ENCODE measurements at regions of chr1 and their contacts with region 1.

Region 1: DNA sequence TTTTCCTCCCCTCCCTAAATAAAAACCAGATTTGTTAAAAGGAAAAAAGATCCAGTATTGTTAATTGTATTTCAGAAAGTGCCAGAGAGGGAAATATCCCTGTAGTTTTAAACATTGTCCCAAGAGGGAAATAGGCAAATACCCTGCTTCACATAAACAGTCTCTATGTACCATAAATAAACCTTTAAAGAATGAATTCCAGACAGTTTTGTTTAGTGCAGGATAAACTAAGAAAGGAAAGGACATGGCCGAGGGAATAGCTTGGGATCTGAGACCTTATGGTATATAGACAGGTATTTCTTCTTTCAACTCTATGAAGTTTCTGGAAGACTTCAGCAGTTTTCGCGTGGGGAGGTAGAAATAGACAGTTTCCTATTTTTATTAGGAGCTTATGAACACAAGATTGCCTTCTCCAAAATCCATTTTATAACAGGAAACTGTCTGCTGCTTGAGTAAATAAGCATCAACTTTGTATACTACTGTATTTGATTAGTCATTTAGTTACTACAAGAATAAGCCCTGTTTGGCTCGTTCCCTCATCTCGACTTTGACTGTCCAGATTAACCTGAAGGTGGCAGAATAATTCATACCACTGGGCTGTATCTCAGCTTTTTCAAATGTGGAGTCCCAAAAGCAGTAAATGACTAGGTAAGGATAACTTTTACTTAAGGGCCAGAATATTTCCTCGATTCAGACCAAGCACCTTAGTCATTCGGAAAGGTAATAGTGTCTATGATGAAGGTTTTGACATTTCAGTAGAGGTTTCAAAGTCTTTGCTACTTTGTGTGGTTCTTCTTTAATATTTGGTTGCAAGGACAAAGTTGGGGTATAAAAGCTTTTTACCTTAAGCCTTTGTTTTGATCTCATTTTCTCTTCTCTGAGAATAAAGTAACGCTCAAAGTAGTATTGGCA is 177.5 kb downstream of the VPS13D start:
- DNase-seq: peak; percentile 56
- ATAC-seq: peak; percentile 34; the same call in 1 of the 3 replicates
- H3K4me3 ChIP-seq: peak overlapping the region in 1 of 3 experiments; percentile 13; a peak in 2 of 6 replicates
- H3K27ac ChIP-seq: peak overlapping the region; percentile 76
- H3K4me1 ChIP-seq: peaks cover 82% of the 10 kb centered on the region
- H3K27me3 ChIP-seq: no peaks in the 10 kb centered on the region
- CTCF ChIP-seq: peak; percentile 66
- EP300 ChIP-seq: no peak
- POLR2A ChIP-seq: no peak
- RAD21 ChIP-seq: no peak

Region 2: DNA sequence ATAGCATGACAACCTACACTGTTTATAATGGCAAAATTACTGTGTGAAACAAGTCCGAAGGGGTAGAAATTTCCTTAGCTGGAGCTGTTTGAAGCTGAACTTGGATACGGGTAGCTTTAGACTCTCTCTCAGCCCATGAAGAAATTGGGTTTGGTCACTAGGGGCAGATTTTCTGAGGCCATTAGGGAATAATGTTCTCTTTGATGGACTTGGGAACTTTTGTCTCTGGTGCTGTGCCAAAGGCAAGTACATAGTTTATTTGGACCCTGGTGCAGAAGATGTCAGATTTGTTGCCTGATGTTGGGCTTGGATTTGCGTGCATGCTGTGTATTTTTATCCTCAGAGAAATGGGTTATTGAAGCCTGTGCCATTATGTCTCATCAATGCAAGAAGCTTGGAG is 67.9 kb before region 1 on chr1:
- CTCF ChIA-PET with region 1: no interaction called
- POLR2A ChIA-PET with region 1: interaction called, 4 read pairs
- in situ Hi-C with region 1: no loop called
- intact Hi-C with region 1: loop called (anchors 10 kb)
- DNase-seq: peak; percentile 62
- ATAC-seq: peak; percentile 71
- H3K4me3 ChIP-seq: no peak overlapping the region
- H3K27ac ChIP-seq: no peak overlapping the region
- H3K4me1 ChIP-seq: peaks cover 47% of the 10 kb centered on the region
- H3K27me3 ChIP-seq: no peaks in the 10 kb centered on the region
- CTCF ChIP-seq: peak; percentile 24; the same call in 1 of the 2 replicates
- EP300 ChIP-seq: no peak
- POLR2A ChIP-seq: no peak
- RAD21 ChIP-seq: no peak

Region 3: DNA sequence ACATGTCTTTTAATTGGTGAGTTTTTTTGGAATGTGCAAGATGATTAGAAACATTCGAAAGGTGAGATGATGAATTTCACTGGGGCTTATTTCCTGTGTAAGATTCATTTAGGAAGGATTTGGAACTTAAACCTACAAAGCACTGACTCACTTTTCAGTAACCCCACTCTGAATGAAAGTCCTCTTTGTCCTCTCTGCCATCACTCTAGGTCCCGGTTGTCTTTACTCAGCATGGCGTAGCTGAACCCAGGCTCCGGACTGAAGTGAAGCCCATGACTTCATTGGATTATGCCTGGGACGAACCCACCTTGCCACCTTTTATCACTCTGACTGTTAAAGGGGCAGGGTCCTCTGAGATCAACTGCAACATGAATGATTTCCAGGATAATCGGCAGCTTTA is 38.0 kb before region 1 on chr1:
- CTCF ChIA-PET with region 1: no interaction called
- POLR2A ChIA-PET with region 1: no interaction called
- in situ Hi-C with region 1: no loop called
- intact Hi-C with region 1: loop called (anchors 5 kb)
- DNase-seq: peak; percentile 66
- ATAC-seq: no peak
- H3K4me3 ChIP-seq: no peak overlapping the region
- H3K27ac ChIP-seq: peak overlapping the region; percentile 10
- H3K4me1 ChIP-seq: peaks cover 22% of the 10 kb centered on the region
- H3K27me3 ChIP-seq: no peaks in the 10 kb centered on the region
- CTCF ChIP-seq: no peak
- EP300 ChIP-seq: no peak
- POLR2A ChIP-seq: no peak
- RAD21 ChIP-seq: no peak

Region 4: DNA sequence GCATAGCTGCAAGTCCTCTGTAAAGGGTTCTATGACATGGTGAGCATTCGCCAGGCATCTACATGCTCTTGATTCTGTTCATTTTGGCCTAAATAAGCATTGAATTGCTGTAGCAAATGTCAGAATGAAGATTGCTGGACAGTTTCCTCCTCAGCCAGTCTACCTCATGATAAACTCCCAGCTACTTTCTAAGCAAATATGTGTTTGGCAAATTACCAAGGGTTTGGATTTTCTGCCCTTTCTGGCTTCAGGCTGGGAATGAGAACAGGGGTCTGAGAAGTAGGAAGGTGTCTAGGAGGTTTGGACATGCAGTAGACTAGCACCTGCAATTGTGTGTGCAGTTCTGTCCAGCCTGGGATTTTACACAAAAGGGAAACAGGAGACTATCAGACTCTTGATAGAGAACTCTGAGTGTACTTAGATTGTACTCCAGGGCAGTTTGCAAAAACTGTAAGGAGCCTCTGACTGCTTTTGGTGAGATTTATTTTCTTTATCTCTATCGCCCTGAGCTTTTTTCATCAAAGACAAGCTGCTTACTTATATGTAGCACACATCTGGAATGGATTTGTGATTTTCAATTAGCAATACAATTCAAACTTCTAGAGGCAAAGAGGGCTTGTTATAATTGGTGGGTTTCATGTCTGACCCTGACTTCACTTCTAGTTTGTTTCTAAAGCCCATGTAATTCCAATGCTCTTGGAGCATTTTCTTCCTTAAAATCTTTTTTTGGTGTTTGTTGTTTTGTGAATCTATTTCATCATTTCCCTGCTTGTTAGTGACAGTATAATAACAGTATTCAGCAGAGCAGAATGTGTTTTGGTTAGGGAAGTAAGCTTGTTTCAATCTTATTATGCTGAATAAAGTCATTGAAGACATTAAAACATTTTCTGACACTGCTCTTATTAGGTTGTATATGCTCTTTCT is 26.7 kb before region 1 on chr1:
- CTCF ChIA-PET with region 1: interaction called, 3 read pairs
- POLR2A ChIA-PET with region 1: interaction called, 126 read pairs
- in situ Hi-C with region 1: no loop called
- intact Hi-C with region 1: loop called (anchors 1 kb)
- DNase-seq: peak; percentile 54
- ATAC-seq: peak; percentile 25
- H3K4me3 ChIP-seq: peak overlapping the region in 1 of 3 experiments; percentile 57; a peak in 1 of 6 replicates
- H3K27ac ChIP-seq: peak overlapping the region; percentile 99
- H3K4me1 ChIP-seq: peaks cover 67% of the 10 kb centered on the region
- H3K27me3 ChIP-seq: no peaks in the 10 kb centered on the region
- CTCF ChIP-seq: no peak
- EP300 ChIP-seq: peak in 1 of 2 experiments; percentile 19; a peak in 1 of 4 replicates
- POLR2A ChIP-seq: 0 out of 4 replicates have a peak, but pooled peaks of 1 of the 2 experiments have one; percentile 31
- RAD21 ChIP-seq: no peak

Region 5: GRCh38 chr1:12386130-12386529 is 21.2 kb before region 1 on chr1:
- CTCF ChIA-PET with region 1: interaction called, 3 read pairs
- POLR2A ChIA-PET with region 1: interaction called, 126 read pairs
- in situ Hi-C with region 1: no loop called
- intact Hi-C with region 1: loop called (anchors 1 kb)
- DNase-seq: peak; percentile 47
- ATAC-seq: no peak
- H3K4me3 ChIP-seq: no peak overlapping the region
- H3K27ac ChIP-seq: no peak overlapping the region
- H3K4me1 ChIP-seq: peaks cover 45% of the 10 kb centered on the region
- H3K27me3 ChIP-seq: no peaks in the 10 kb centered on the region
- CTCF ChIP-seq: no peak
- EP300 ChIP-seq: peak in 1 of 2 experiments; percentile 60; a peak in 1 of 4 replicates
- POLR2A ChIP-seq: no peak
- RAD21 ChIP-seq: no peak

Region 6: GRCh38 chr1:12477936-12478611 is 70.8 kb after region 1 on chr1:
- CTCF ChIA-PET with region 1: no interaction called
- POLR2A ChIA-PET with region 1: interaction called, 9 read pairs
- in situ Hi-C with region 1: no loop called
- intact Hi-C with region 1: loop called (anchors 5 kb)
- DNase-seq: peak; percentile 99
- ATAC-seq: peak; percentile 98
- H3K4me3 ChIP-seq: peak overlapping the region in 1 of 3 experiments; percentile 24; a peak in 2 of 6 replicates
- H3K27ac ChIP-seq: peak overlapping the region; percentile 63
- H3K4me1 ChIP-seq: peaks cover 77% of the 10 kb centered on the region
- H3K27me3 ChIP-seq: no peaks in the 10 kb centered on the region
- CTCF ChIP-seq: no peak
- EP300 ChIP-seq: peak in 1 of 2 experiments; percentile 76; a peak in 2 of 4 replicates
- POLR2A ChIP-seq: peak; percentile 6 to 55; a peak in 3 of 4 replicates
- RAD21 ChIP-seq: peak; percentile 28; the same call in 1 of the 2 replicates

Region 7: DNA sequence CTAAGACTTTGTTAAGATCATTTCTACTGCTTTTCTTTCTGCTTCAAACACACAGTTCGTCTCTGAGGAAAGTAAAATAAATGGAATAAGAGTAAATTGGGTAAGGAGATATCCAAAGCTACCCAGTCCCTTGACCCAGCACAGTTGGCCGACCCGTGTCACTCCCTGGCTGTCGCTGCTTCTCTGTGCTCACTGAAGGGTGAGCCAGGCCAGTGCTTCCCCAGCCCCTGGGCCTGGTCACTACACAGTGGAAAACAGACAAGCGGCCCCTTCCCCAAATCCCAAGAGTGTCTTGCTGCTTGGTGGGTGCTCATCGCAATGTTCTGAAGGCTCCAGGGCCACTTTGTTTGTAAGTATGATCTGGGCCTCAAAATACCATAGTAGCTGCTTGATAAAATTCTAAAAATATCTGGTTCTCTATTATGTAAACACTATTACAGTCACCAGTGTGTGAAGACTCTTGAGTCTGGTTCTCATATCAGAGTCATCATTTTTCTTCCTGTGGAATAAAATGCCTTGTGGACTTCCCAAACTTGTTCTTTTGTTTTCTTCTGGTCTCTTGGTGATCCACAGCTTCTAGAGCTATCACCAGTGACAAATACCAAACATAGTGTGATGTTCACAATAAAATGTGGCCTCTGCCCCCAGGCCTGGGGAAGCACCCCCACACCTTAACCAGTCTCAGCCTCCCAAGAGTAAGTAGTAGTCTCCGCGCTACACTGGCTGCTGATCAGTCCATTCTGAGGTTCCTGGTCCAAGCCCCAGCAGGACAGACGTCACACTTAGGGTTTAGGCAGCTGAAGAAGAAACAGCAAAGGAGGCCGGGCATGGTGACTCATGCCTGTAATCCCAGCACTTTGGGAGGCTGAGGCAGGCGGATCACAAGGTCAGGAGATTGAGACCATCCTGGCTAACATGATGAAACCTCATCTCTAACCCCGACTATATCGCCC is 104.5 kb after region 1 on chr1:
- CTCF ChIA-PET with region 1: no interaction called
- POLR2A ChIA-PET with region 1: no interaction called
- in situ Hi-C with region 1: no loop called
- intact Hi-C with region 1: no loop called
- DNase-seq: no peak
- ATAC-seq: no peak
- H3K4me3 ChIP-seq: no peak overlapping the region
- H3K27ac ChIP-seq: no peak overlapping the region
- H3K4me1 ChIP-seq: peaks cover 12% of the 10 kb centered on the region; the same call in 1 of the 2 replicates
- H3K27me3 ChIP-seq: no peaks in the 10 kb centered on the region; a peak in 1 of 5 replicates
- CTCF ChIP-seq: no peak
- EP300 ChIP-seq: no peak
- POLR2A ChIP-seq: no peak
- RAD21 ChIP-seq: no peak